ENCODE measurements at regions of chr11 and their contacts with region 1.

Region 1: DNA sequence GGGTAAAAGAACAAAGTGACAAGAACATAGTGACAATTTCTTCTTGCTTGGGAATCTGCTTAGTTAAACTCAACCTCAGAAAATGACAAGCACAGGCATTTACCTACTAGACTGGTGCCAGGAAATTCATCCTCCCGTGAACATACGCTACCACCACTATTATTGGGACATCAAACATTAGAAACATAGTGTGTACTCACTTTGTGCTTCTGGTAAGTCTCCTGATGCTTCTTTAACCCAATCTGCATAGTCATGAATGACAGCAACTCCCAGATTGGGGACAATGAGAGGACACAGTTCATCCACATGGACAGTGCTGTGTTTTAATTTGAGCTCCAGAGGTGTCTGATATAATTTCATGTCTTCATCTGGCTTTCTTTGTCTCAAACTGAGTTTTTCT is 29.2 kb upstream of the CHRNA10 start:
- DNase-seq: no peak
- ATAC-seq: no peak
- H3K4me3 ChIP-seq: no peak overlapping the region
- H3K27ac ChIP-seq: no peak overlapping the region
- H3K4me1 ChIP-seq: no peaks in the 10 kb centered on the region
- H3K27me3 ChIP-seq: no peaks in the 10 kb centered on the region
- CTCF ChIP-seq: no peak
- EP300 ChIP-seq: no peak
- POLR2A ChIP-seq: no peak
- RAD21 ChIP-seq: no peak

Region 2: DNA sequence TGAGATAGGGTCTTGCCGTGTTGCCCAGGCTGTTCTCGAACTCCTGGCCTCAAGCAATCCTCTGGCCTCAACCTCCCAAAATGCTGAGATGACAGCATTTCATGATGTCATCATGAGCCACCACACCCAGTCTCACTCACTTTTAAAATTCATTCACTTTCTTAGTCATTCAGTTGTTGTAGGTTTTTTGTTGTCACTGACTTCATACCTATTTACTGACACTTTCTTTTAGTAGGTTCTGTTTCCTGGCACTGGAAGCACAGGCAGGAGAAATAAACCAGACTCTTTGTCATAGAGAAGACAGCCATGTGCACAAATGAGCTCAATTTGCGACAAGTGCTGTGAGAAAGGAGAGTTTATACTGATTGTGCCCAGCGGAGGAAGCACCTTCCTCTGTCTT is 69.1 kb before region 1 on chr11:
- CTCF ChIA-PET with region 1: no interaction called
- POLR2A ChIA-PET with region 1: no interaction called
- RAD21 ChIA-PET with region 1: no interaction called
- SMC1A ChIA-PET with region 1: no interaction called
- in situ Hi-C with region 1: loop called (anchors 10 kb)
- intact Hi-C with region 1: no loop called
- DNase-seq: no peak
- ATAC-seq: no peak
- H3K4me3 ChIP-seq: no peak overlapping the region
- H3K27ac ChIP-seq: no peak overlapping the region
- H3K4me1 ChIP-seq: no peaks in the 10 kb centered on the region
- H3K27me3 ChIP-seq: no peaks in the 10 kb centered on the region; a peak in 3 of 4 replicates
- CTCF ChIP-seq: no peak
- EP300 ChIP-seq: no peak
- POLR2A ChIP-seq: no peak
- RAD21 ChIP-seq: no peak

Region 3: GRCh38 chr11:3685923-3686322 is 14.5 kb before region 1 on chr11:
- CTCF ChIA-PET with region 1: no interaction called
- POLR2A ChIA-PET with region 1: no interaction called
- RAD21 ChIA-PET with region 1: no interaction called
- SMC1A ChIA-PET with region 1: no interaction called
- in situ Hi-C with region 1: no loop called
- intact Hi-C with region 1: no loop called
- DNase-seq: no peak
- ATAC-seq: no peak
- H3K4me3 ChIP-seq: no peak overlapping the region
- H3K27ac ChIP-seq: no peak overlapping the region
- H3K4me1 ChIP-seq: no peaks in the 10 kb centered on the region
- H3K27me3 ChIP-seq: no peaks in the 10 kb centered on the region
- CTCF ChIP-seq: no peak
- EP300 ChIP-seq: no peak
- POLR2A ChIP-seq: no peak
- RAD21 ChIP-seq: no peak

Region 4: GRCh38 chr11:3747684-3748083 is 47.3 kb after region 1 on chr11:
- CTCF ChIA-PET with region 1: no interaction called
- POLR2A ChIA-PET with region 1: no interaction called
- RAD21 ChIA-PET with region 1: no interaction called
- SMC1A ChIA-PET with region 1: no interaction called
- in situ Hi-C with region 1: no loop called
- intact Hi-C with region 1: loop called (anchors 5 kb)
- DNase-seq: no peak
- ATAC-seq: no peak
- H3K4me3 ChIP-seq: no peak overlapping the region
- H3K27ac ChIP-seq: no peak overlapping the region
- H3K4me1 ChIP-seq: no peaks in the 10 kb centered on the region
- H3K27me3 ChIP-seq: no peaks in the 10 kb centered on the region
- CTCF ChIP-seq: no peak
- EP300 ChIP-seq: no peak
- POLR2A ChIP-seq: no peak
- RAD21 ChIP-seq: no peak